Aorta (tissue), 5 donors: ENCODE measurements at regions of chr12 and their contacts with region 1.

Region 1: DNA sequence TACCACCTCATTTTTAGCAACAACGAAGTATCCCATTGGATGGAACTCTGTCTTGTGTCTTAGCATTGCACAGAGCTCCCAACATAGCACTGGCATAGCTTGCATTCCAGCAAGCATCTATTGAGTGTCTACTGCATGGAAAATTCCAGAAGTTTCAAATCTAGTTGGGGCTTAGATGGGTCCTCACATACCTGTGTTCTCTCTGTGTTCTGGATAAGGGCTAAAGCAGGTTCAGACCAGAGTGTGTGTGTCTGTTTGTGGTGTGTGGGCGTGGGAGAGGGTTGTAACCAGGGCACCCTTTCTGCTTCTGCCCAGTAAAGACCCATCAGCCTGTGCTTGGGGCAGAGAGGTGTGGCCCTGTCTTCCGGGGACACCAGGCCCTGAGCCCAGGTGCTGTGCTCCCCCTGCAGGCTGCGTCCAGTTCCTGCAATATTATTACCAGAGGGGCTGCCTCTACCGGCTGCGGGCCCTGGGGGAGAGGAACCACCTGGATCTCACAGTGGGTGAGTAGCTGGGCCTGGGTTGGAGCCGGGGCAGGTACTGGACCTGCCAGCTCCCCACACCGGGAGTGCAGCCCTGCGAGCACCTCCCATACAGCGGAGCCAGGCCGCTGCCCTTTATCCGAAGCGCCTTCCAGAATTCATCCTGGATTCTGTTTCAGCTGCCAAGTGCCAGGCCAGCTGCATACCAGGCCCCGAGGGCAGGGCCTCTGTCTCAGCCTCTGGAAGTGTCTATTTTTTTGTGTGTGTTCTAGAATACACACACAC is 20.3 kb downstream of the RHOF start:
- DNase-seq: peak; percentile 79 to 90
- ATAC-seq: peak; percentile 73
- H3K4me3 ChIP-seq: no peak overlapping the region
- H3K27ac ChIP-seq: no peak overlapping the region
- H3K4me1 ChIP-seq: no peaks in the 10 kb centered on the region
- H3K27me3 ChIP-seq: no peaks in the 10 kb centered on the region

Region 2: GRCh38 chr12:121811434-121812319 is 38.5 kb after region 1 on chr12:
- intact Hi-C with region 1: loop called (anchors 5 kb)
- DNase-seq: peak; percentile 79 to 92
- ATAC-seq: peak; percentile 94
- H3K4me3 ChIP-seq: peak overlapping the region; percentile 47 to 67
- H3K27ac ChIP-seq: peak overlapping the region in 1 of 2 donors; percentile 34
- H3K4me1 ChIP-seq: no peaks in the 10 kb centered on the region
- H3K27me3 ChIP-seq: no peaks in the 10 kb centered on the region